Esophagus muscularis mucosa (tissue), 4 donors: ENCODE measurements at regions of chr5 and their contacts with region 1.

Region 1: DNA sequence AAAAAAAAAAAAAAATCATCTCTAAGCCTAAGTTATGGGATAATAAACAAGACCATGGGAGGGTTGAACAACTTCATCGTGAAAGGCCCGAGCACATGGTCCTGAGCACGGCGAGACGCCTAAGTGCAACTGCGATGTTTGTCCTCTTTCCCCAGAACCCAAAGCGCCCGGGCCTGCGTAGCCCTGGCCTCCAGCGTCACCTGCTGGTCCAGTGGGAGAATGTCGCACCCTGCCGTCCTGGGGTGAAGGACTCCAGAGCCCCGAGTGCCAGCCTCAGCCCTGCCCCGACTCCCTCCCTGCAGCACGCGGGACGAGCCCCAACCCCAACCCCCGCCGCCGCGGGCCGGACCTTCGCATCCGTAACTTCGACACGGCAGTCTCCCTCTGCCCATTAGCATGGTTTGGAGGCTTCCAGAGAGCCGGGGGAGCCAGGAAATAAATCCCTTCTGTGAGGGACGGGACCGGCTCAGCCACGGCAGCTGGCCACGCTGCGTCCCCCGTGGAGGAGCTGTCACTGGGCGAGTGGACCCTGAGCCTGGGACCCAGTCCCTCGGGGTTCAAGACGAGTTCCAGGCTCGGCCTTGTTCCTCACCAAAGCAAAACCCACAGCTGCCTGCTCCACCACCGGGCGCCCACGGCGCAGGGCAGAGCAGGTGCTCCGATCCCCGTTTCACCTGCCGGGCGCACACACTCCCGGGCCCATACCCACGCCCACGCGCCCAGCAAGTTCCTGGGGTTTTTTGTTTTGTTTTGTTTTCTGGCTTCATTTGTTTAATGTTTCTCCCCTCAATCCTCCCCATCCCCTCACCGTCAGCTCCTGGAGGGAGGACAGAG is 132.5 kb upstream of the HAND1 start:
- DNase-seq: no peak
- H3K4me3 ChIP-seq: peak overlapping the region; percentile 31 to 49 (median 41)
- H3K27ac ChIP-seq: no peak overlapping the region
- H3K4me1 ChIP-seq: peaks cover 9 to 19% (median 17%) of the 10 kb centered on the region in 4 donors
- H3K27me3 ChIP-seq: peaks cover 0 to 80% (median 21%) of the 10 kb centered on the region in 4 donors
- CTCF ChIP-seq: peak; percentile 72 to 87 (median 73)
- EP300 ChIP-seq: no peak
- POLR2A ChIP-seq: no peak

Region 2: GRCh38 chr5:154467655-154468354 is 142.7 kb before region 1 on chr5:
- intact Hi-C with region 1: loop called (anchors 1 kb)
- DNase-seq: peak; percentile 94
- H3K4me3 ChIP-seq: no peak overlapping the region
- H3K27ac ChIP-seq: no peak overlapping the region
- H3K4me1 ChIP-seq: peaks cover 2 to 8% (median 4%) of the 10 kb centered on the region in 4 donors
- H3K27me3 ChIP-seq: peaks cover 0 to 49% (median 19%) of the 10 kb centered on the region in 4 donors
- CTCF ChIP-seq: peak; percentile 72 to 92 (median 89)
- EP300 ChIP-seq: no peak
- POLR2A ChIP-seq: no peak